ENCODE measurements at regions of chr11 and their contacts with region 1.

Region 1: GRCh38 chr11:93000511-93001476 is 31.3 kb downstream of the MTNR1B start:
- DNase-seq: peak; percentile 87
- ATAC-seq: peak; percentile 89
- H3K4me3 ChIP-seq: peak overlapping the region in 1 of 2 experiments; percentile 12; a peak in 1 of 4 replicates
- H3K27ac ChIP-seq: peak overlapping the region; percentile 22; the same call in 1 of the 2 replicates
- H3K4me1 ChIP-seq: peaks cover 16 to 30% of the 10 kb centered on the region in 2 experiments
- H3K27me3 ChIP-seq: no peaks in the 10 kb centered on the region
- CTCF ChIP-seq: no peak
- POLR2A ChIP-seq: no peak
- RAD21 ChIP-seq: no peak

Region 2: GRCh38 chr11:92240916-92241315 is 759.9 kb before region 1 on chr11:
- CTCF ChIA-PET with region 1: no interaction called
- POLR2A ChIA-PET with region 1: no interaction called
- RAD21 ChIA-PET with region 1: no interaction called
- intact Hi-C with region 1: no loop called
- DNase-seq: no peak
- ATAC-seq: no peak
- H3K4me3 ChIP-seq: no peak overlapping the region
- H3K27ac ChIP-seq: no peak overlapping the region
- H3K4me1 ChIP-seq: no peaks in the 10 kb centered on the region
- H3K27me3 ChIP-seq: no peaks in the 10 kb centered on the region
- CTCF ChIP-seq: no peak
- POLR2A ChIP-seq: no peak
- RAD21 ChIP-seq: no peak

Region 3: GRCh38 chr11:92735039-92735438 is 265.8 kb before region 1 on chr11:
- CTCF ChIA-PET with region 1: no interaction called
- POLR2A ChIA-PET with region 1: no interaction called
- RAD21 ChIA-PET with region 1: no interaction called
- intact Hi-C with region 1: no loop called
- DNase-seq: no peak
- ATAC-seq: no peak
- H3K4me3 ChIP-seq: no peak overlapping the region
- H3K27ac ChIP-seq: no peak overlapping the region
- H3K4me1 ChIP-seq: no peaks in the 10 kb centered on the region
- H3K27me3 ChIP-seq: no peaks in the 10 kb centered on the region
- CTCF ChIP-seq: peak in 2 of 3 experiments; percentile 45 to 49; a peak in 4 of 6 replicates
- POLR2A ChIP-seq: no peak
- RAD21 ChIP-seq: no peak

Region 4: GRCh38 chr11:93054881-93055280 is 54.1 kb after region 1 on chr11:
- CTCF ChIA-PET with region 1: no interaction called
- POLR2A ChIA-PET with region 1: interaction called, 6 read pairs
- RAD21 ChIA-PET with region 1: no interaction called
- intact Hi-C with region 1: loop called (anchors 1 kb)
- DNase-seq: peak; percentile 97
- ATAC-seq: peak; percentile 94
- H3K4me3 ChIP-seq: 0 out of 4 replicates have a peak overlapping the region, but pooled peaks of 1 of the 2 experiments have one; percentile 14
- H3K27ac ChIP-seq: peak overlapping the region; percentile 61
- H3K4me1 ChIP-seq: peaks cover 12 to 23% of the 10 kb centered on the region in 2 experiments; a peak in 3 of 4 replicates
- H3K27me3 ChIP-seq: no peaks in the 10 kb centered on the region
- CTCF ChIP-seq: no peak
- POLR2A ChIP-seq: no peak
- RAD21 ChIP-seq: peak; percentile 43

Measured in HCT116 (cell line).